Endothelial cell of umbilical vein (primary cell): ENCODE measurements at regions of chr10 and their contacts with region 1.

Region 1: DNA sequence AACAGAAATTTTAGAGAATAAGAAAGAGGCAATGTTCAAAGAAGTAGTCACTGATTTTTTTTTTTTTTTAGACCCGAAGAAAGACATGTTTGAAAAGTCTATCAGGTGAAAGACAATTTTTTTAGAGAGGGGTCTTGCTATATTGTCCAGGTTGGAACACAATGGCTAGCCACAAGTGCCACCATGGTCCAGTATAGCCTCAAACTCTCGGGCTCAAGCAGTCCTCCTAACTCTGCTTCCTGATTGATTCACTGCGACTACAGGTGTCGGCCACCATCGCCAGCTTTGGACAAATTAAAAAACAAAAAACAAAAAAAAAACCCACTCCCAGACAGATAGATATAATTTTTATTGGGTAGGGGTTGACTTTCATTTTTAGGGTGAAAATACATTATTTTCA is 22.3 kb downstream of the FAM149B1 start:
- DNase-seq: no peak
- H3K4me3 ChIP-seq: no peak overlapping the region
- H3K27ac ChIP-seq: no peak overlapping the region
- H3K4me1 ChIP-seq: no peaks in the 10 kb centered on the region
- H3K27me3 ChIP-seq: no peaks in the 10 kb centered on the region
- CTCF ChIP-seq: no peak
- POLR2A ChIP-seq: no peak

Region 2: DNA sequence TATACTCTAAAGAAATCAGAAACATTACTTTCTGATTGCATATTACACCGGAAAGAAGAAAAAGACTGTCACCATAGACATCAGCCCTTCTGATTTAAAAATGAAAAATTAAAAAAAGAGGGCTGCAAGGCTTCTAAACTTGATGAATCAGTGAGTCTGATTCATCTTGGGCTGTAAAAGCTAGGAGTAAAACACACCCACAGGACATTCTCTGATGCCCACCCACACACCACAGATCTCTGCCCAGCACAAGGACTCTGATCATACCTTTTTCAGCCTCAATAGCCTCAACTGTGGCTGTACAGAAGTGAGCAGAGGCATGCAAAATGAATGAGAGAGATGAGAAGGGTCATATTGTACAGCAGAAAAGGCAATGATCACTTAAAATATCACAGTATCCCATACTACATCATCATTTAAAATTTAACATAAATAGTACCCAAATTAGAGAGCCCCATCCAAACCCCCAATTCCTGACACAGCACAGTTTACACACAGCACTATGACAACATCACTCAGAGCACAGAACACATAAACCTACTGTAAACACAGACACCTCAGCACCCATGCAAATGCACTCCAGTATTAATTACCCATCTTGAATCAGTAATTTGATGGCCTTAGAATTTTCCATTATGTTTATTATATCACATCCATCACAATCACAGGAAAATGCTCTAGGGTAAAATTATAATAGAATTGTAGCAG is 249.6 kb after region 1 on chr10:
- CTCF ChIA-PET with region 1: no interaction called
- POLR2A ChIA-PET with region 1: interaction called, 12 read pairs
- dilution Hi-C with region 1: no loop called
- intact Hi-C with region 1: no loop called
- DNase-seq: no peak
- H3K4me3 ChIP-seq: no peak overlapping the region
- H3K27ac ChIP-seq: no peak overlapping the region
- H3K4me1 ChIP-seq: no peaks in the 10 kb centered on the region
- H3K27me3 ChIP-seq: no peaks in the 10 kb centered on the region
- CTCF ChIP-seq: no peak
- POLR2A ChIP-seq: no peak